CD14-positive monocyte (primary cell): ENCODE measurements at regions of chr16 and their contacts with region 1.

Region 1: GRCh38 chr16:23510164-23510914 is at the start of gene GGA2:
- DNase-seq: peak; percentile 78 to 81 (median 80)
- H3K4me3 ChIP-seq: peak within 1 kb of the TSS; percentile 59 to 98 (median 94)
- H3K4me3 Mint-ChIP-seq: peak within 1 kb of the TSS; percentile 97 to 98
- H3K27ac ChIP-seq: peak within 1 kb of the TSS; percentile 23 to 85
- H3K27ac Mint-ChIP-seq: peak within 1 kb of the TSS; percentile 79 to 95 (median 89)
- H3K4me1 ChIP-seq: peaks cover 43 to 46% of the 10 kb centered on the region in 2 donors
- H3K4me1 Mint-ChIP-seq: peaks cover 42% of the 10 kb centered on the region
- H3K27me3 ChIP-seq: no peaks in the 10 kb centered on the region
- H3K27me3 Mint-ChIP-seq: peaks cover 0 to 4% (median 0%) of the 10 kb centered on the region in 3 donors
- CTCF ChIP-seq: no peak
- polyA plus RNA-seq, gene GGA2: 37.5 to 55.4 (median 49.5) TPM

Region 2: GRCh38 chr16:23578101-23578830 is 67.9 kb after region 1 on chr16:
- intact Hi-C with region 1: no loop called
- DNase-seq: peak in 2 of 3 donors; percentile 20 to 48
- H3K4me3 ChIP-seq: no peak overlapping the region
- H3K4me3 Mint-ChIP-seq: no peak overlapping the region
- H3K27ac ChIP-seq: peak overlapping the region; percentile 30 to 38
- H3K27ac Mint-ChIP-seq: peak overlapping the region in 5 of 7 donors; percentile 29 to 80 (median 46)
- H3K4me1 ChIP-seq: peaks cover 9 to 13% of the 10 kb centered on the region in 2 donors
- H3K4me1 Mint-ChIP-seq: peaks cover 10% of the 10 kb centered on the region
- H3K27me3 ChIP-seq: no peaks in the 10 kb centered on the region
- H3K27me3 Mint-ChIP-seq: no peaks in the 10 kb centered on the region
- CTCF ChIP-seq: no peak

Region 3: DNA sequence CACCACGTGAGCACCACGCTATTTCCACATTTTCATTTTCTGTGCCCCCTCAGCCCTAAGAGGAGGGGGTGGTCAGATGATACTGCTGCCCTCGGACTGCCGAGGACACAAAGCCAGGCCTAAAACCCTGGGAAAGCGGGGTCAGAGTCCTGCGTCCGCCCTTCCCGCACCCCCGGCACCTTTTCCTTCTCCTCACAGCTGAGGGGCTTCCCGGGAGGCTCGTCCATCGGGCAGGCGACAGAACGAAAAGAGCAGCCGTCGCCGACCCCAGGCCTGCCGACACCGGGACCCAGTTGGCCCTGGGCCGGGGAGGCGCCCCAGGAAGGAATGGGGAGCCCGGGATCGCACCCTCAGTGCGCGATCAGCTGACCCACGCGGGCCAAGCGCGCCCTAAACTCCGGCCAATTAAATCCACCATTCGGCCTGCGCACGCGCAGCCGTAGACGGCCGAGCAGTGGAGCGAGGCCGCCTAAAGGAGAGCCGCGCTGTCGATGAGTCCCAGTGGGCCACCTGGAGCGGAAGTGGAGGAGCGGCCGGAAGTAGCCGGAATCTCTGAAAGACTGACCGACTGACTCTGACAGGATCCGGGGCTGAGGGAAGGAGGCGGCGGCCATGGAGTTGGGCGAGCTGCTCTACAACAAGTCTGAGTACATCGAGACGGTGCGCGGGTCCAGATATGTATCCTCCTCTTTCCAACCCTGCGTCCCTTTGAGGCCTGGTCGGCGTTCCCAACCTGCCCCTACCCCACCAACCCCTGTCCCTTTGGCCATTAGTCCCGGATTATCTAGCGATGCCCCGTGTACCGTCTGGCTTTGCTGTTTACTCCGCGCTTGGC is 130.8 kb after region 1 on chr16 and contains the starts of genes DCTN5 and PALB2:
- intact Hi-C with region 1: loop called in 1 of 2 experiments (anchors 10 kb)
- DNase-seq: peak; percentile 91 to 96 (median 92)
- H3K4me3 ChIP-seq: peak within 1 kb of the TSS; percentile 85 to 100 (median 85)
- H3K4me3 Mint-ChIP-seq: peak within 1 kb of the TSS; percentile 98
- H3K27ac ChIP-seq: peak within 1 kb of the TSS; percentile 71 to 98
- H3K27ac Mint-ChIP-seq: peak within 1 kb of the TSS; percentile 93 to 97 (median 95)
- H3K4me1 ChIP-seq: peaks cover 21 to 24% of the 10 kb centered on the region in 2 donors
- H3K4me1 Mint-ChIP-seq: peaks cover 18% of the 10 kb centered on the region
- H3K27me3 ChIP-seq: no peaks in the 10 kb centered on the region
- H3K27me3 Mint-ChIP-seq: no peaks in the 10 kb centered on the region
- CTCF ChIP-seq: no peak
- polyA plus RNA-seq, gene DCTN5: 29.3 to 54.3 (median 42.0) TPM
- polyA plus RNA-seq, gene PALB2: 2.3 to 3.3 (median 2.5) TPM